Endothelial cell of umbilical vein (primary cell): ENCODE measurements at regions of chr6 and their contacts with region 1.

Region 1: DNA sequence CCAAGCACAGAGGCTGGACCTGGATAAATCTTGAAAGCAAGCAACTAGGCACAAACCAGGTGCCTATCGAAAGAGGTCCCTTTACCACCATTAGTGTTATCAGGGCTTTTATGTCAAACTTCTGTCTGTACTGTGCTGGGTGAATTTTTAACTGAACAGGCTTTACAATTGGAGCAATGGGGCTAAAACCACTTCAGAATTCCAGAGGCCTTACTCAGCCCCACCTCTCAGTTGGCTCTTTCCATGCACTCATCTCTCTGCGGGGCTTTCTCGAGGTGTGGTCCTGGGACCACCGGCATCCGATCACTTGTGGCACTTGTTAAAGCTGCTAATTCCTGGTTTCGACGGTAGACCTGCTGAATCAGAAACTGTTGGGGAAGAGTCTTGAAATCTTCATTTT is 232.5 kb downstream of the SOX4 start:
- DNase-seq: no peak
- H3K4me3 ChIP-seq: no peak overlapping the region
- H3K27ac ChIP-seq: no peak overlapping the region
- H3K4me1 ChIP-seq: peaks cover 27% of the 10 kb centered on the region
- H3K27me3 ChIP-seq: no peaks in the 10 kb centered on the region
- CTCF ChIP-seq: no peak
- POLR2A ChIP-seq: no peak

Region 2: GRCh38 chr6:21414065-21414464 is 412.0 kb before region 1 on chr6:
- CTCF ChIA-PET with region 1: no interaction called
- POLR2A ChIA-PET with region 1: no interaction called
- dilution Hi-C with region 1: no loop called
- intact Hi-C with region 1: no loop called
- DNase-seq: no peak
- H3K4me3 ChIP-seq: no peak overlapping the region
- H3K27ac ChIP-seq: no peak overlapping the region
- H3K4me1 ChIP-seq: no peaks in the 10 kb centered on the region
- H3K27me3 ChIP-seq: no peaks in the 10 kb centered on the region
- CTCF ChIP-seq: no peak
- POLR2A ChIP-seq: no peak

Region 3: DNA sequence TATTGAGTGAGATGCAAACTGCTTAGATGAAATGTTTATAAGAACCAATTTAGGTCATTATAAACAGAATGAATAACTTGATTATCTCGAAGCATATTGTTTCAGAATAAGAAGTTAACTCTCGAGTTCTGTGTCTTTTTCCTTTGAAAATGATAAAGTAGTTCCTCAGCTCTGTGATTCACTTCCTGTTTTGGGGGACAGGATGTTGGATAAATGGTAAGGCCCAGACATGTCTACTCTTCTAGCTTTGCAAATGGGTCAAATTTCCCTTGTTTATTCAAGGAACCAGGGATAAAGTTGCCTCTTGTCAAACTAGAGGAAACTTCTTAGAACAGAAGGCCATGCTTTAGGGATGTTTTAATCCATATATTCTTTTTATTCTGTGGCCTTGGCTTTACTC is 14.4 kb after region 1 on chr6:
- CTCF ChIA-PET with region 1: interaction called, 3 read pairs
- POLR2A ChIA-PET with region 1: no interaction called
- dilution Hi-C with region 1: no loop called
- intact Hi-C with region 1: loop called (anchors 1 kb)
- DNase-seq: peak; percentile 96
- H3K4me3 ChIP-seq: peak overlapping the region in 1 of 3 experiments; percentile 13
- H3K27ac ChIP-seq: peak overlapping the region; percentile 96
- H3K4me1 ChIP-seq: peaks cover 45% of the 10 kb centered on the region
- H3K27me3 ChIP-seq: no peaks in the 10 kb centered on the region
- CTCF ChIP-seq: no peak
- POLR2A ChIP-seq: peak; percentile 49